ENCODE measurements at regions of chr3 and their contacts with region 1.

Region 1: GRCh38 chr3:124688581-124689454 is 41.4 kb upstream of the UMPS start:
- DNase-seq: peak; percentile 43 to 87
- H3K4me3 ChIP-seq: no peak overlapping the region
- H3K27ac ChIP-seq: no peak overlapping the region
- H3K4me1 ChIP-seq: no peaks in the 10 kb centered on the region
- H3K27me3 ChIP-seq: no peaks in the 10 kb centered on the region
- CTCF ChIP-seq: peak; percentile 72 to 86 (median 85)
- EP300 ChIP-seq: no peak
- POLR2A ChIP-seq: no peak
- RAD21 ChIP-seq: peak; percentile 87 to 91

Region 2: DNA sequence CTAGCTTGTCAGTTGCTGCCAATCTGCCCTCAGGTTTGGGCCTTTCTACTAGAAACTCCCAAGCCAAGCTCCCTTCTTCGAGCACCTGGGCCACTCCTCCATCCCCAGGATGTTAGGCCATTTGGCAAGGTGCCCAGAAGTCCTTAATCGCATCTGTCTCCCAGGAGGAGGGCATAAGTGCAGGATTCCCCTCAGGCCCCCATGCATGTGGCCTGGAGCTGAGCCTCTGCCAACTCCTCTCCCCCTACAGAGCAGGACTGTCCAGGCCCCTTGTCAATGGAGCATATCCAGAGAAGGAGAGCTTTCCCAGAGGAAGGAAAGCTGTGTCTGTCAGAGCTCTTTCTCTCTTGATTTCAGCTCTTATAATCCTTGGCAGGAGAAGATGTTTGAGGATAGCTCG is 514.3 kb before region 1 on chr3:
- CTCF ChIA-PET with region 1: no interaction called
- POLR2A ChIA-PET with region 1: no interaction called
- DNase-seq: no peak
- H3K4me3 ChIP-seq: no peak overlapping the region
- H3K27ac ChIP-seq: no peak overlapping the region
- H3K4me1 ChIP-seq: no peaks in the 10 kb centered on the region
- H3K27me3 ChIP-seq: no peaks in the 10 kb centered on the region; a peak in 1 of 7 replicates
- CTCF ChIP-seq: no peak
- EP300 ChIP-seq: no peak
- POLR2A ChIP-seq: no peak
- RAD21 ChIP-seq: no peak

Region 3: DNA sequence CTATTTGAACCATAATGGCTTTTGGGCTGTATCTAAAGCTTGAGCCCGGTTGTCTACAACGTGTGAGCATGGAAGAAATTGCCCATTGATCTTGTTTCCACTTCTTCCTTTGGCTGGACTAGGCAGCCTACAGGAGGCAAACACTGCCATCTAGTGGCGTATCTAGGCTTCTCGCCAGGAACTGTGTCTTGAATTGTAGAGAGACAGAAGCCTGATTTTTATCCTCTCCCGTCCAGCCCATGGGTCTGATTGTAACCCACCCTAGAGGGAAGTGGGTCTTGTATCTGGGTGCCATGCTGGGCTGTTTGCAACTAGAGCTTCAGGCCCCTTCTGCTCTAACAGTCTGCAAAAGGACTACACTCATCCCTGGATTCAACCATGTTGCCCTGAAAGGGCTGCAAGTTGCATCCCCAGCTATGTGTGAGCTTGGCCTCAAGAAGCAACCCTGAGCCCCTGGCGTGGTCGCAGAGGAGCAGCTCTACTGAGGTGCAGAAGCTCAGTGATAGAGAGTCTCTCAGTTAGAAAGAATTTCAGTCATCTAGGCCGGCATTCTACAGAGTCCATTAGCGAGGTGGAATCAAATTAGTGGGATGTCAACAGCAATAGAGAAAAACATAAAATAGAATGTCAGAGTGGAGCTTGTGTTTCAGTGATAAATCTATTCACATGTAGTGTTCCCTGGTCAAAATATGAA is 128.8 kb before region 1 on chr3:
- CTCF ChIA-PET with region 1: interaction called, 144 read pairs
- POLR2A ChIA-PET with region 1: interaction called, 6 read pairs
- DNase-seq: peak in 1 of 2 experiments; percentile 84
- H3K4me3 ChIP-seq: no peak overlapping the region
- H3K27ac ChIP-seq: no peak overlapping the region
- H3K4me1 ChIP-seq: peaks cover 0 to 4% (median 2%) of the 10 kb centered on the region in 4 experiments; a peak in 4 of 7 replicates
- H3K27me3 ChIP-seq: no peaks in the 10 kb centered on the region
- CTCF ChIP-seq: peak; percentile 53 to 93 (median 86)
- EP300 ChIP-seq: no peak
- POLR2A ChIP-seq: no peak
- RAD21 ChIP-seq: peak; percentile 92 to 93

Region 4: GRCh38 chr3:124576565-124577493 is 112.0 kb before region 1 on chr3:
- CTCF ChIA-PET with region 1: interaction called, 11 read pairs
- POLR2A ChIA-PET with region 1: interaction called, 3 read pairs
- DNase-seq: no peak
- H3K4me3 ChIP-seq: no peak overlapping the region
- H3K27ac ChIP-seq: no peak overlapping the region
- H3K4me1 ChIP-seq: no peaks in the 10 kb centered on the region
- H3K27me3 ChIP-seq: 0 out of 7 replicates have a peak, but pooled peaks cover 0 to 2% (median 0%) of the 10 kb centered on the region in 4 experiments
- CTCF ChIP-seq: no peak
- EP300 ChIP-seq: no peak
- POLR2A ChIP-seq: no peak
- RAD21 ChIP-seq: no peak

Region 5: GRCh38 chr3:124620600-124621063 is 68.2 kb before region 1 on chr3:
- CTCF ChIA-PET with region 1: interaction called, 18 read pairs
- POLR2A ChIA-PET with region 1: no interaction called
- DNase-seq: no peak
- H3K4me3 ChIP-seq: no peak overlapping the region
- H3K27ac ChIP-seq: no peak overlapping the region
- H3K4me1 ChIP-seq: no peaks in the 10 kb centered on the region
- H3K27me3 ChIP-seq: no peaks in the 10 kb centered on the region
- CTCF ChIP-seq: no peak
- EP300 ChIP-seq: no peak
- POLR2A ChIP-seq: no peak
- RAD21 ChIP-seq: peak in 1 of 2 experiments; percentile 14; a peak in 1 of 4 replicates

Region 6: GRCh38 chr3:124664804-124665203 is 24.0 kb before region 1 on chr3:
- CTCF ChIA-PET with region 1: interaction called, 33 read pairs
- POLR2A ChIA-PET with region 1: no interaction called
- DNase-seq: no peak
- H3K4me3 ChIP-seq: no peak overlapping the region
- H3K27ac ChIP-seq: no peak overlapping the region
- H3K4me1 ChIP-seq: no peaks in the 10 kb centered on the region
- H3K27me3 ChIP-seq: no peaks in the 10 kb centered on the region
- CTCF ChIP-seq: no peak
- EP300 ChIP-seq: no peak
- POLR2A ChIP-seq: no peak
- RAD21 ChIP-seq: no peak

Region 7: GRCh38 chr3:124676236-124676635 is 12.6 kb before region 1 on chr3:
- CTCF ChIA-PET with region 1: interaction called, 10 read pairs
- POLR2A ChIA-PET with region 1: no interaction called
- DNase-seq: no peak
- H3K4me3 ChIP-seq: no peak overlapping the region
- H3K27ac ChIP-seq: no peak overlapping the region
- H3K4me1 ChIP-seq: no peaks in the 10 kb centered on the region
- H3K27me3 ChIP-seq: no peaks in the 10 kb centered on the region
- CTCF ChIP-seq: no peak
- EP300 ChIP-seq: no peak
- POLR2A ChIP-seq: no peak
- RAD21 ChIP-seq: no peak